ENCODE measurements at regions of chr1 and their contacts with region 1.

Region 1: DNA sequence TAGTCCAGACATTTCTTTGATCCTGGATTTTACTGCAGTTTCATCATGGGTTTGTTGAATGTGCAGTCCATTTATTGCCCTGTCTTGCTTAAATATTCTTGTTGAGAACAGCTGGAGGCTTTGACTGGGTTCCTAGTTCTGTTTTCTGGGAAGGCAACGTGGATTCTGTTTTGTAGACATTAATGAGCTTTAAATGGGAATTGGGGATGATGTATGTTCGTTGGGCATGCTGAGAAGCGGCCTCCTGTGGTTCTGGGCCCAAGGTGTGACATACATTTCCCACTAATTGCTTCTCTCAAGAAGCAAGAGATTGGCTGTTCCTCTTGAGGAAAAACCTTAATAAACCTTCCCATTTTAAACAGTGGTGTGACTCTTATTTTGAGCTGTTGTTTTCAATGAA is 22.9 kb downstream of the INKA2 start:
- DNase-seq: no peak
- ATAC-seq: no peak
- H3K4me3 ChIP-seq: no peak overlapping the region
- H3K4me3 Mint-ChIP-seq: no peak overlapping the region
- H3K27ac ChIP-seq: peak overlapping the region in 1 of 2 donors; percentile 32
- H3K27ac Mint-ChIP-seq: no peak overlapping the region
- H3K4me1 ChIP-seq: no peaks in the 10 kb centered on the region
- H3K4me1 Mint-ChIP-seq: no peaks in the 10 kb centered on the region
- H3K27me3 ChIP-seq: no peaks in the 10 kb centered on the region
- H3K27me3 Mint-ChIP-seq: no peaks in the 10 kb centered on the region
- CTCF ChIP-seq: no peak

Region 2: DNA sequence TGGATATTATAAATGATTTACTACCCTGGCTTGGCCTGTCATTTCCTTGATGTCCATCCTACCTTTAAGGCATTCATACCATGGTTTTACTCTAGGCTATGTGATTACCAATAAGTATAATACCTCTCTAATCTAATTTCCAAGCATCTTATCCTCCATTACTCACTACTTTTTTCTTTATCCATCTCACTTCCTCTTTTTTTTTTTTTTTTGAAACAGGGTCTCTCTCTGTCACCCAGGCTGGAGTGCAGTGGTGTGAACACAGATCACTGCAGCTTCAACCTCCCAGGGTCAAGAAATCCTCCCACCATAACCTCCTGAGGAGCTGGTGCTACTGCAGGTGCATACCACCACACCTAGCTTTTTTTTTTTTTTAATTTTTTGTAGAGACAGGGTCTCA is 17.1 kb before region 1 on chr1:
- CTCF ChIA-PET with region 1: interaction called, 31 read pairs
- POLR2A ChIA-PET with region 1: no interaction called
- intact Hi-C with region 1: no loop called
- DNase-seq: peak; percentile 36
- ATAC-seq: peak; percentile 45
- H3K4me3 ChIP-seq: no peak overlapping the region
- H3K4me3 Mint-ChIP-seq: no peak overlapping the region
- H3K27ac ChIP-seq: peak overlapping the region in 1 of 2 donors; percentile 65
- H3K27ac Mint-ChIP-seq: no peak overlapping the region
- H3K4me1 ChIP-seq: peaks cover 13 to 25% of the 10 kb centered on the region in 2 donors
- H3K4me1 Mint-ChIP-seq: peaks cover 28% of the 10 kb centered on the region
- H3K27me3 ChIP-seq: no peaks in the 10 kb centered on the region
- H3K27me3 Mint-ChIP-seq: no peaks in the 10 kb centered on the region
- CTCF ChIP-seq: no peak

Region 3: DNA sequence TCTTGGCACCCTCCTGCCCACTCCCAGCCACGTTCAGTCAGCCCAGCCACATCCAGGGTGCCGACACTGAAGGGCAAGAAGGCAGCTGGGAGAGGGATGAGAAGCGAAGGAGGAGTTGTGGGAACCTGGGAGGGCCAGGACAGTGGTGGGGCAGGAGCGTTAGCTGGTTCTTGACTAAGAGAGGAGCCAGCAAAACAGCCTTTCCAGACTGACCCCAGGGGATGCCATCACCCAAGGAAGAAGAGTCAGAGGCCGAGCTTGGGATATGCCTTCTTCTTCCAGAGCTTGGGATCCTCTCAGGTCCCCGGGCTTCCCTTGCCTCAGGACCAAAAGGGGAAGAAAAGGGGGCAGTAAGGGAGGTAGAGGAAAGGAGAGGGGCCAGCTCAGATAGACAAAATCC is 15.6 kb after region 1 on chr1:
- CTCF ChIA-PET with region 1: interaction called, 66 read pairs
- POLR2A ChIA-PET with region 1: interaction called, 3 read pairs
- intact Hi-C with region 1: no loop called
- DNase-seq: no peak
- ATAC-seq: no peak
- H3K4me3 ChIP-seq: no peak overlapping the region
- H3K4me3 Mint-ChIP-seq: no peak overlapping the region
- H3K27ac ChIP-seq: no peak overlapping the region
- H3K27ac Mint-ChIP-seq: no peak overlapping the region
- H3K4me1 ChIP-seq: peaks cover 0 to 5% of the 10 kb centered on the region in 2 donors
- H3K4me1 Mint-ChIP-seq: peaks cover 2% of the 10 kb centered on the region
- H3K27me3 ChIP-seq: peaks cover 0 to 8% (median 1%) of the 10 kb centered on the region in 4 experiments
- H3K27me3 Mint-ChIP-seq: no peaks in the 10 kb centered on the region
- CTCF ChIP-seq: no peak

Region 4: GRCh38 chr1:111747282-111747734 is 31.0 kb after region 1 on chr1:
- CTCF ChIA-PET with region 1: interaction called, 102 read pairs
- POLR2A ChIA-PET with region 1: interaction called, 3 read pairs
- intact Hi-C with region 1: loop called (anchors 1 kb)
- DNase-seq: peak; percentile 70
- ATAC-seq: peak; percentile 68
- H3K4me3 ChIP-seq: no peak overlapping the region
- H3K4me3 Mint-ChIP-seq: no peak overlapping the region
- H3K27ac ChIP-seq: no peak overlapping the region
- H3K27ac Mint-ChIP-seq: no peak overlapping the region
- H3K4me1 ChIP-seq: no peaks in the 10 kb centered on the region
- H3K4me1 Mint-ChIP-seq: peaks cover 2% of the 10 kb centered on the region
- H3K27me3 ChIP-seq: peaks cover 0 to 3% (median 0%) of the 10 kb centered on the region in 4 experiments
- H3K27me3 Mint-ChIP-seq: no peaks in the 10 kb centered on the region
- CTCF ChIP-seq: peak; percentile 47

Region 5: DNA sequence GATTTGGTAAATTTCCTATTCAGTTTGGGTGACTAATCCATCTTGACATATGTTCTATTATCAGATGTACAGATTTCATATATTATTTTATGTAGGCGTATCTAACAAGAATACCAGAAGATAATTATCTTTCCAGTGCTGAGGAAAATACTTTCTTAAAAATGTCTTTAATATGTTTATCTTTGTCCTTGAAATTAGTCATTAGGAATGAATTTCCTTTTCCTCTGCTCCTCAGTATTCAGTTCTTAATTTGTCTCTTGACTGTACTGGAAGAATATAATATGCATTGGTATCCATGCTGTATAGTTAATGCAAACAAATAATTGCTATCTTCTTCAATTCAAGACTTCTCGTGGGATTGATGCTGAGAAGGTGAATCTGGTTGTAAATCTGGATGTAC is 46.0 kb after region 1 on chr1:
- CTCF ChIA-PET with region 1: interaction called, 198 read pairs
- POLR2A ChIA-PET with region 1: no interaction called
- intact Hi-C with region 1: no loop called
- DNase-seq: no peak
- ATAC-seq: no peak
- H3K4me3 ChIP-seq: no peak overlapping the region
- H3K4me3 Mint-ChIP-seq: no peak overlapping the region
- H3K27ac ChIP-seq: no peak overlapping the region
- H3K27ac Mint-ChIP-seq: no peak overlapping the region
- H3K4me1 ChIP-seq: no peaks in the 10 kb centered on the region
- H3K4me1 Mint-ChIP-seq: peaks cover 6% of the 10 kb centered on the region
- H3K27me3 ChIP-seq: no peaks in the 10 kb centered on the region
- H3K27me3 Mint-ChIP-seq: no peaks in the 10 kb centered on the region
- CTCF ChIP-seq: no peak